ENCODE measurements at regions of chr20 and their contacts with region 1.

Region 1: GRCh38 chr20:24781422-24781980 is 167.6 kb upstream of the CST7 start:
- DNase-seq: peak in 8 of 10 donors; percentile 56 to 92 (median 68)

Region 2: GRCh38 chr20:24007073-24007595 is 774.4 kb before region 1 on chr20:
- intact Hi-C with region 1: no loop called
- DNase-seq: no peak

Region 3: DNA sequence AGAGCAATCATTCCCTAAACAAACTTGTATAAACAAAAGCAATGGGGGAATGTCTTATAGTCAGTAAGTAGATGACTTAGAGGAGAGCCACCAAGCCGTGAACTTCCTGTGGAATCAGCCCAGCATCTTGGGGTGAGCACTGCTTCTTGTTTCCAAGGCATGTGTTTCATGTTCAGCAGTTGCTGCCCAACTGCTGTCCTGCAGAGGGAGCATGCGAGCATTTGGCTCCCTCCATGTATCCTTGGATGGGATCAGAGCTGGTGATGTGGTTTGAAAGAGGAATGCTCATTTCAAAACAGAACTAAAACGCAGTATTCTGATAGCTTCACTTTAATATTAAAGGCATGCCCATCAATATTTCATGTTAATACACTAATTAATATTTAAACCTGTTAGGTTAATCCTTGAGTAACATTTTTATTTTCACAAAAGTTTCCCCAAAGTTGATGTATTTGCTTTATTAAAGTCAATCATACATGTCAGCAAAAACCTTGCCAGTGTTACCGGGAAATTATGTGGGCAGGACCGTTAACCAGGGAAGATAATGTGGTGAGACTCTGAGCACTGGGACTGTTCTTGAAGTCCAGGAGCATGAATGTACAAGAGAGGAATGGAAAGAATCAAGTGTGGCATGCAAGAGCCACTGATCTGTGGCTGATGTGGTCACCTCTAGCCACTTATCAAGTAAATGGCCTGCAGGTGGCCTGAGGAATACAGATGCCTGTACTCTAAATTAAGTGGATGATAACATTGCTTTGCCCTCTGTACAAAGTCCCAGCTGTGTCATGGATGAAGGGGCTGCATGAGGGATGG is 620.7 kb before region 1 on chr20:
- intact Hi-C with region 1: loop called (anchors 10 kb)
- DNase-seq: peak; percentile 36 to 94 (median 66)

Region 4: DNA sequence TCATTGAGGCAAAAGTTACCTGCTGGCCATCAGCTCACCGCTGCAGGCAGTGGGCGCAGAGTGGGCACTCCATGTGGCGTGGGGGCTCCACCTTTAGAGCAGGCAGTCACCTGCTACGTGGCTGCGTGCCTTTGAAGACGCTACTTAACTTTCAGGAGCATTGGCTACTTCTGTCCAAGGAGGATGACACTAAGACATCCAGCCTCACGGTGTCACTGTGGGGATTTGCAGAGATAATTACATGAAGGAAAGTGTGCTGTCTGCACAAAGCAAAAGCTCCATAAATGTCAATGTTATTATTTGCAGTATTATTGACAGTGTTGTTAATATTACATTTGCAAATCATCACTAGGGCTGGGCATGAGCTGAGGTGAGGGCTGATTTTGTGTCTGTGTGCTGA is 478.1 kb before region 1 on chr20:
- intact Hi-C with region 1: loop called (anchors 2 kb)
- DNase-seq: peak in 4 of 10 donors; percentile 23 to 86 (median 54)

Region 5: GRCh38 chr20:24469116-24469893 is 312.2 kb before region 1 on chr20 and contains the start of gene SYNDIG1:
- intact Hi-C with region 1: loop called (anchors 10 kb)
- DNase-seq: peak; percentile 60 to 96 (median 76)

Region 6: DNA sequence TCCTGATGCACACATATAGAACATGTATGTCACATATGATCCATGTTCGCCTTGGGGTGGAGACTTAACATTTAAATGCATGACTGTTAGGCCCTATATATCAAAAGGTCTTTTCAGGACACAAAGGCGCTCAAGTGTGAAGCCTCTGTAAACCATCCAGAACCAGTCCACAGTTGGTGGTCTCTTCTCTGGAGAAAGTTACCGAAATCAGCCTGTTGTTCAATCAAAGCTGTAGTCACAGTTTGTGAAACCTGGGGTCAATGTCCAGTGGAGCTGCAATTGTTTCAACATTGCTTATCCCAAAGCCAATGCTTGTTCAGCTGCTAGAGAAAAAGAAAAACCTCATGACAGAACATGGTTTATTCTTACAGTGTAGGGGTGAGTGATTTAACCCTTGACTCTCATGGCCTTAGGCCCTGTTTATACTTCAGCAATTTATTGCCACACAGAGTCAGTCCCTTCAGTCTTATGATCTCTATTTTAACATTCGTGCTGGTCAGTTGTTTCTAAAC is 26.0 kb before region 1 on chr20:
- intact Hi-C with region 1: no loop called
- DNase-seq: no peak